BJ (cell line): ENCODE measurements at regions of chr1 and their contacts with region 1.

Region 1: GRCh38 chr1:21508580-21509350 is 458 bp upstream of the ALPL start:
- DNase-seq: no peak
- H3K4me3 ChIP-seq: peak overlapping the region; percentile 25
- H3K27me3 ChIP-seq: peaks cover 22% of the 10 kb centered on the region
- CTCF ChIP-seq: peak; percentile 57

Region 2: DNA sequence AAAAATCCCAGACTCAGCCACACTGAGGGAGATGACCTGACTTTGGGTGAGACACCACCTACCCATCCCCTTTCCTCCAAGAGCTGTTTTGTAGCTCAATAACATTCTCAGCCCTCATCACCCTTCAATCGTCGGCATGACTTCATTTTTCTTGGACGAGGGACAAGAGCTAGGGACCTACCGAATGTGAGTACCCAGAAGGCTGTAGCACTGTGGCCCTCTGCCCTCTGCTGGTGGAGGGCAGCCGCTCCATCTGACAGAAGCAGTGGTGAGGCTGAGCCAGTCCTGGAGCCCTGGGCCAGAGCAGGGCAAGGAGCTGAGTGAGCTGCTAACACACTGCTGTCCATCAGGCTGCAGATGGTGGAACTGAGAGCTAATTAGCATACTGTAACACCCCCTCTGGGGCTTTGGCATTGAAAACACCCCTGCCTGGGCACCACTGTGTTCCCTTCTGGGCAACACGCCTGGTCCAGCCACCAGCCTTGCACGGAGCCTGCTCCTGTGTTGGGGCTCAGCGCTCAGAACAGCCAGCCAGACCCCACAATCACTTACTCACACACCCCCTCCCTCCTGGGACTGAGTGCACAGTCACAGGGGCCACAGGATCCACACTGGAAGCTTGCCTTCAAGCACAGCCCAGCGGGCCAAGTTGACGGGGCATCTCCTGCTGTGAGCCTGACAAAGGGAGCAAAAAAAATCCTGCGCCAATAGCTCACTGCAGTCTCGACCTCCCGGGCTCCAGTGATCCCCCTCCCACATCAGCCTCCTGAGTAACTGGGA is 17.8 kb before region 1 on chr1:
- CTCF ChIA-PET with region 1: interaction called, 10 read pairs
- POLR2A ChIA-PET with region 1: no interaction called
- DNase-seq: peak; percentile 24
- H3K4me3 ChIP-seq: no peak overlapping the region
- H3K27me3 ChIP-seq: peaks cover 5% of the 10 kb centered on the region
- CTCF ChIP-seq: peak; percentile 82

Region 3: DNA sequence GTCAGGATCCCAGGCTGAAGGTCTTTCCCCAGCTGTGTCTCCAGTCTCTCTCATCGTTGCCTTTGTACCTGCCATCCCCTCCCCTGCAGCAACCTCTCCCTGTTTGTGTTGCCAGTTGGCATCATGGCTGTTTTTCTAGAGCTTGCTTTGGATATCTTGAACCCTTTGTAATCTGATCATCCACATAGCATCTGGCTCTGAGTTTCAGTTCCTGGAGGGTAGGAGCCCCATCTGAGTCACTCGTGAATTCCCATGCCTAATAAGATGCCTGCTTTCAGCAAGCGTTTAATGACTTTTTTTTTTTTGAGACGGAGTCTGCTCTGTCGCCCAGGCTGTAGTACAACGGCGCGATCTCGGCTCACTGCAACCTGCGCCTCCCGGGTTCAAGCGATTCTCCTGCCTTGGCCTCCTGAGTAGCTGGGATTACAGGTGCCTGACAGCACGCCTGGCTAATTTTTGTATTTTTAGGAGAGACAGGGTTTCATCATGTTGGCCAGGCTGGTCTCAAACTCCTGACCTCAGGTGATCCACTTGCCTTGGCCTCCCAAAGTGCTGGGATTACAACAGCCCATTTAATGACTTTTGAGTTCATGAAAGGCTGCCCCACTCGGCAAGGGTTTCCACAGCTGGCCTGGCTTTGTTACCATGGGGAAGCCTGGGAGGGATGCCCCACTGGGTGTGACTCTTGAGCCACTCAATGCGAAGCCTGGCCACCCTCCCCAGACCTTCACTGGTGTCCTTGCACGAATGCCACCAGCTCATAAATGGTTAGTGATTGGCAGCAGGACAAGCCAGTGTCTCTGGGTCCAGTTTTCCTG is 12.3 kb after region 1 on chr1:
- CTCF ChIA-PET with region 1: interaction called, 34 read pairs
- POLR2A ChIA-PET with region 1: interaction called, 8 read pairs
- DNase-seq: peak; percentile 21
- H3K4me3 ChIP-seq: no peak overlapping the region
- H3K27me3 ChIP-seq: no peaks in the 10 kb centered on the region; the same call in none of the 2 replicates
- CTCF ChIP-seq: no peak

Region 4: DNA sequence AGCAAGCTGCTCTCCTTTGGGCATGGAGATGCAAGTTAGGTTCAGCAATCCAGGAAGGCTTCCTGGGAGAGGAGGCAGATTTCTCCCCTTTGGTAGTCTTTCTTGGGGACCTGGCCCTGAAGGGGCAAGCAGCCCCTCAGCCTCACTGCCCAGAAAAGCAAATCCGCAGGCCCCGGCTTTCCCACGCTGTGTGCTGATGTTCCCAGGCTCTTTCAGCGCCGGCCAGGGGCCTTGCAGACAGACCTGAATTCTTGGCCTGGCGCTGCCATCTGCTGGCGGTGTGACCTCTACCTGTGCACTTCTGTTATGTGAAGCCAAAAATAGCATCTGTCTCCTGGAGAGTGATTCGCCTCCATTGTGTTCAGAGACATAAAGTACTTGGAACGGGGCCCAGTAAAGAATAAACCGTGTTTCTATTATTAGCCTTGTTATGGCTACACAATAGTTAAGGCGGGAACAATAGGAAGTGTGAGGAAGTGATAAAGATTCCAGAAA is 65.3 kb after region 1 on chr1:
- CTCF ChIA-PET with region 1: interaction called, 69 read pairs
- POLR2A ChIA-PET with region 1: no interaction called
- DNase-seq: no peak
- H3K4me3 ChIP-seq: no peak overlapping the region
- H3K27me3 ChIP-seq: peaks cover 5% of the 10 kb centered on the region; the same call in 1 of the 2 replicates
- CTCF ChIP-seq: peak; percentile 65

Region 5: GRCh38 chr1:21594935-21595897 is 86.5 kb after region 1 on chr1:
- CTCF ChIA-PET with region 1: interaction called, 12 read pairs
- POLR2A ChIA-PET with region 1: no interaction called
- DNase-seq: no peak
- H3K4me3 ChIP-seq: no peak overlapping the region
- H3K27me3 ChIP-seq: peaks cover 6% of the 10 kb centered on the region
- CTCF ChIP-seq: peak; percentile 81

Region 6: GRCh38 chr1:21659099-21659923 is 150.5 kb after region 1 on chr1:
- CTCF ChIA-PET with region 1: interaction called, 15 read pairs
- POLR2A ChIA-PET with region 1: no interaction called
- DNase-seq: no peak
- H3K4me3 ChIP-seq: no peak overlapping the region
- H3K27me3 ChIP-seq: peaks cover 12% of the 10 kb centered on the region
- CTCF ChIP-seq: peak; percentile 93